ENCODE measurements at regions of chr6 and their contacts with region 1.

Region 1: DNA sequence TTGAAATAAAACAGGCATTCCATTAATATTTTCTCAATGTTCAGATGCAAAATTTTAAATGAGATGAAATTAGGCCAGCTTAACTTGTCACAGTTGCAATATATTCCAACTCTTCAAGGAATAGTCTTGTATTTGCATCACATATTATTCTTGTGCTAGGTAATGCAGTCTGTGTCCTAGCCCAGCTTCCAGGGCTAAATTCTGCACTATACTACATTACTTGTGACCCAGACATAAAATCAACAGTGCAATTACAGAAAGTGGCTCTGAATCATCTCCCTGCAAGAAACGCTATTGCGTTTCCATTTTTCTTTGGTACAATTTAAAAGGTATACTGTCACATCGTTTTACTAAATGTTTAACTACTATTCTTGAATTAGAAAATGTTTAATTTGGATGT is 399.2 kb downstream of the TENT5A start:
- DNase-seq: no peak
- H3K4me3 ChIP-seq: no peak overlapping the region
- H3K27ac ChIP-seq: no peak overlapping the region
- H3K4me1 ChIP-seq: no peaks in the 10 kb centered on the region
- H3K27me3 ChIP-seq: no peaks in the 10 kb centered on the region
- CTCF ChIP-seq: no peak
- EP300 ChIP-seq: no peak
- POLR2A ChIP-seq: no peak

Region 2: DNA sequence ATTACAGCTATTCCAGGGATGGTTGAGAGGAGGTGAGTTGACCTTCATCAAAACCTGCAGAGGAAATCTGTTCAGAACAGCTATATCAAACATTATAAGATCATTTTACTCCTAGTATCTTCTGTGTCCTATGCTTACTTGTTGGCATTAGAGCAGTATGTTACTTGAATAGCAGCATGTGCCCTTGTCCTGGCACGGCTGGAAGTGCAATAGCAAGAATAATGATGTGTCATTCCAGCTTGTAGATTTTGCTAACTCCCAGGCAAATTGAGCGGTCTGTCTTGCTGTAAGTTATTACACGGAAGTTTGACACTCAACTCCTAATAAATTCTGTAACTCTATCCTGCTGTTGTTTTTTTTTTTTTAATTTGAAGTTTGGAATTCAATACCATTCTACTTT is 13.7 kb after region 1 on chr6:
- intact Hi-C with region 1: loop called in 1 of 4 experiments (anchors 1 kb)
- DNase-seq: no peak
- H3K4me3 ChIP-seq: no peak overlapping the region
- H3K27ac ChIP-seq: no peak overlapping the region
- H3K4me1 ChIP-seq: no peaks in the 10 kb centered on the region
- H3K27me3 ChIP-seq: no peaks in the 10 kb centered on the region
- CTCF ChIP-seq: no peak
- EP300 ChIP-seq: no peak
- POLR2A ChIP-seq: no peak

Region 3: DNA sequence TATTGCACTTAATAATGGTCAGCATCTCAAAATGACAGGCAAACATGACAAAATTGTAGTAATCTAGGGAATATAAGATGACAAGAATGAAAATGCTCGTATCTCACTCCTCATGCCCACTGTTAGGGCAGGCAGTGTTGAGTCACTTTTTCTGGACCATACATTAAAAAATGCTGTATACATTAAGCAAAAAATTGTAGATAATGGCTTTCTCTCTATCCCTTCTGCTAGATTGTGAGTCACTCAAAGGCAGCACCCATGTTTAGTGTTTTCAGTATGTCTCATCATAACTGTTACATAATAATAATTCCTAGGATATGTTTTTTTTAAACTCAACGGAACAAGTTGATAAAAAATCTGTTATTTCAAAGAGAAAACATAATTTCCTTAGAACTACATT is 200.0 kb after region 1 on chr6:
- intact Hi-C with region 1: no loop called
- DNase-seq: no peak
- H3K4me3 ChIP-seq: no peak overlapping the region
- H3K27ac ChIP-seq: no peak overlapping the region
- H3K4me1 ChIP-seq: peaks cover 3% of the 10 kb centered on the region
- H3K27me3 ChIP-seq: no peaks in the 10 kb centered on the region
- CTCF ChIP-seq: no peak
- EP300 ChIP-seq: no peak
- POLR2A ChIP-seq: no peak